Left ventricle myocardium inferior (tissue), 1 donor: ENCODE measurements at regions of chr9 and their contacts with region 1.

Region 1: DNA sequence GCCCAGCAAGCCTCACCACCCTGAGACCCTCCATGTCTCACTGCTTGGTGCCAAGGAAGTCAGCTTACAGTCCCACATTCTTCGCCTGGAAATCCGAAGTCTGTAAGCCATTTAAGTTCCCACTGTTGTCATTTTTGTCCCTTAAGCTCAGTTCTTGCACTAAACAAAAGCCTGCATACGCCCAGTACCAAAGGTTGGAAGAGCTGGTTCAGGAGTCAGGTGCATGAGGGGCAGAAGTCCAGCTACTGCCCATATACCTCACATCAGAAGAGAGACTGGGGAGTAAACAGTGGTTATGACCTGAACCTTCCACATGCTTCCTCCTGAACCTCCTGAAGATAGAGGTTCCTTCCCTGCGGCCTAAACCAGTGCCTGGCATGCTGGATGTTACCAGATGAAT is 146.0 kb downstream of the FRMD3 start:
- DNase-seq: no peak
- H3K4me3 ChIP-seq: no peak overlapping the region
- H3K27ac ChIP-seq: no peak overlapping the region
- H3K4me1 ChIP-seq: peaks cover 15% of the 10 kb centered on the region
- H3K27me3 ChIP-seq: no peaks in the 10 kb centered on the region
- CTCF ChIP-seq: no peak

Region 2: DNA sequence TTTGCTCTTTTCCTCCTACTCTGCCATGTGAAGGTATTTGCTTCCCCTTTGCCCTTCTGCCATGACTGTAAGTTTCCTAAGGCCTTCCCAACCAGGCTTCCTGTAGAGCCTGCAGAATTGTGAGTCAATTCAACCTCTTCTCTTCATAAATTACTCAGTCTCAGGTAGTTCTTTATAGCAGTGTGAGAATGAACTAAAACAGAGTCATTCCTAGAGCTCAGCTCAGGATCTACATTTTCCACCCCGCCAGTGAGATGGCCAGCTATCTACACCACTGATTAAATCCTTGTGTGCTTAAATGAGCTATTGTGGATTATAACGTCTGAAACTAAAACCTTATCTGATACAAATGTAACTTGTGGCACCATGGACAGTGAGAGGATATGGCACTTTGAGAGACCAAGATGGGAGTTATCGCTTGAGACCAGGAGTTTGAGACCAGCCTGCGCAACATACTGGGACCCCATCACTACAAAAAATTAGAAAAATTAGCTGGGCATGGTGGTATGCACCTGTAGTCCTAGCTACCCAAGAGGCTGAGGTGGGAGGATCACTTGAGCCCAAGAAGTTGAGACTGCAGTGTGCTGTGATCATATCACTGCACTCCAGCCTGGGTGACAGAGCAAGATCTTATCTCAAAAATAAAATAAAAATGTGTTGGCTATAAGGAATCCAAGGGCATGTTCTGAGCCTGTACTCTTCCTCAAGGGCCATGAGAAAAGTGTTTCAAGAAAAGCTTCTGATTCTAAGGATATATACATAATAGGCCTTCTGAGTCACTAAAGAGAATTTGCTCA is 91.2 kb after region 1 on chr9:
- intact Hi-C with region 1: loop called (anchors 10 kb)
- DNase-seq: no peak
- H3K4me3 ChIP-seq: no peak overlapping the region
- H3K27ac ChIP-seq: no peak overlapping the region
- H3K4me1 ChIP-seq: no peaks in the 10 kb centered on the region
- H3K27me3 ChIP-seq: no peaks in the 10 kb centered on the region
- CTCF ChIP-seq: no peak